ENCODE measurements at regions of chr16 and their contacts with region 1.

Region 1: DNA sequence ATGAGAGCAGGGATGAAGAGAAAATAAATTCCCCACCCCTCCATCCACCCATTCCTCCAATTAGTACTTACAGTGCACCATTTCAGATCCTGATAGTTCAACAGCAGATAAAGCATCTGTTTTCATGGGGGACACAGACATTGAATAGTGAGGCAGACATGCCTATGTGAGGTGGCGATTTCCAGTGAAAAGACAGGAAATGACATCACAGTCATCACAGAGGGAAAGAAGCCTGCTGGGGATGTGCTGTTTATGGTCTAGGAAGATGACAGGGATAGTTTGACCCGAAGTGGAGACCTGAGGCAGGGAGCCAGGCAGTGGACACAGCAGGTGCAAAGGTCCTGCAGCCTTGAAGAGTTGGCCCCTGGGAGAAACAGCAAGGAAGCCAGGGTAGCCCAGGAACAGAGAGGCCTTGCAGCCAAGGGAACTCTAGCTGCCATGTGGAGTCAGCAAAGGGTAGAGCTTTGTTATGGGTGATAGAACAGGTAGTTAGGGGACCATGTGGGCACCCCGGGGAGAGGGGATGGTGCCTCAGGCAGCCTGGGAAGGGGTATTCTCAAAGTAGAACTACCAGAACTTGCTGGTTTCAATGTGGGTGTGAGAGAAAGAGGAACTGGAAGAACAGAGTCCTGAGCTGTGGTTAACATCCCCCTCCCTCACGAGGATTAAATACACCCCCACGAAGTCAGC is 256.6 kb downstream of the CPPED1 start:
- DNase-seq: no peak
- ATAC-seq: peak; percentile 78
- H3K4me3 Mint-ChIP-seq: peak overlapping the region; percentile 49
- H3K27ac Mint-ChIP-seq: peak overlapping the region; percentile 75
- H3K4me1 Mint-ChIP-seq: peaks cover 88% of the 10 kb centered on the region
- H3K27me3 Mint-ChIP-seq: no peaks in the 10 kb centered on the region
- CTCF ChIP-seq: no peak

Region 2: DNA sequence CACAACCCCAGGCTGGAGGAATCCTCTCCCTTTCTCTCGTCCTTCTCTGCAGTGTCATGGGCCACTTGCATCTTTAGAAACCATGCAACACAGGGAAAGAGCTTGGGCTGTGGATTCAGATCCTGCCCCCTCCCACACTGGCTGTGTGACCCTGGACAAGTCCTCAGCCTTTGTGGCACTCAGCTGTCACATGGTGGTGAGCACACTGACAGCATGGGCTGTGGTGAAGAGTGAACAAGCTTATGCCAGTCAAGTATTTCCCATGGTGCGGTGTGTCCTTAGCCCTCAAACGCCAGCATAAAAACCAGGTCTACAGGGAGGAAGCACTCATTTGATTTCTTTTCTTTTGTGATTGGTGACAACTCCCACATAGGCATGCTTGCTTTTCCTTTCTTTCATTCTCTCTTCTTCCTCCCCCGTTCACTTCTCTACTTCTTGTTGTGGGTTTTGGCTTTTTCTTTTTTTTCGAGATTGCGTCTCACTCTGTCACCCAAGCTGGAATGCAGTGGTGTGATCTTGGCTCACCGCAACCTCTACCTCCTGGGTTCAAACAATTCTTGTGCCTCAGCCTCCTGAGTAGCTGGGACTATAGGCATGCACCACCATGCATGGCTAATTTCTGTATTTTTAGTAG is 57.6 kb before region 1 on chr16:
- CTCF ChIA-PET with region 1: no interaction called
- POLR2A ChIA-PET with region 1: no interaction called
- intact Hi-C with region 1: loop called (anchors 10 kb)
- DNase-seq: no peak
- ATAC-seq: no peak
- H3K4me3 Mint-ChIP-seq: no peak overlapping the region
- H3K27ac Mint-ChIP-seq: peak overlapping the region; percentile 0
- H3K4me1 Mint-ChIP-seq: peaks cover 3% of the 10 kb centered on the region
- H3K27me3 Mint-ChIP-seq: no peaks in the 10 kb centered on the region
- CTCF ChIP-seq: no peak

Region 3: DNA sequence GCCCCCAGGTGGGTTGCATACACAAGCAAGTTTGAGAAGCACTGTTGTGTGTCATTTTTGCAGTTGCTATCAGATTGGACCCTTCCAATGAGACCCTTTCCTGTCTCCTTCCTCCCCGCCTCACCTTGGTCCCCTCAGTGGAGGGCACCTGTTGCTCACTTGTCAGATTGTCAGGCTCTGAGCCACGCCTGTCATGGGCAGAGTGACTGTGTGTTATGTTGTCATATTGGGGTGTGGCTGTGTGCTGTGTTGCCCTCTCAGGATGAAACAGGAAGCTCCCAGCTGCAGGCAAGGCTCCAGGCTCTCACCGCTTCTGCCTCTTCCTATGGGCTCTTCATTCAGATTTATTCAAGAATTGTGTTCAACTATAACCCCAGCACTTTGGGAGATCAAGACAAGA is 46.3 kb before region 1 on chr16:
- CTCF ChIA-PET with region 1: no interaction called
- POLR2A ChIA-PET with region 1: no interaction called
- intact Hi-C with region 1: no loop called
- DNase-seq: no peak
- ATAC-seq: no peak
- H3K4me3 Mint-ChIP-seq: no peak overlapping the region
- H3K27ac Mint-ChIP-seq: no peak overlapping the region
- H3K4me1 Mint-ChIP-seq: peaks cover 18% of the 10 kb centered on the region
- H3K27me3 Mint-ChIP-seq: no peaks in the 10 kb centered on the region
- CTCF ChIP-seq: no peak

Measured in activated B cell treated with CpG ODN at 0.5 μM for 24 hours (primary cell).